Transverse colon (tissue), 4 donors: ENCODE measurements at regions of chr6 and their contacts with region 1.

Region 1: DNA sequence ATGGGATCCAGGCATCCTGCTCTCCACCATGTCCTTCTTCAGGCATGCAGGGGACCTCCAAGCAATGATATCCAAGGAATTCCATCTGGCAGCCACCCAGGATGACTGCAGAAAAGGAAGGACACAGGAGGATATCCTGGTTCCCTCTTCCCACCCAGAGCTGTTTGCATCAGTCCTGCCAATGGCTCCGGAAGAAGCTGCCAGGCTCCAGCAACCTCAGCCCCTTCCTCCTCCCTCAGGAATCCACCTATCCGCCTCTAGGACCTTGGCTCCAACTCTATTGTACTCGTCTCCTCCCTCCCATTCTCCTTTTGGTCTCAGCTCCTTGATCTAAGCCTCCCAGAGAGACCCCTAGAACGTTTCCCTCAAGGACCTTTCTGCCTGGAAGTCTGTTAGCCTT is 733 bp upstream of the PSORS1C2 start:
- DNase-seq: no peak
- H3K4me3 ChIP-seq: no peak overlapping the region
- H3K27ac ChIP-seq: no peak overlapping the region
- H3K4me1 ChIP-seq: peaks cover 0 to 26% (median 17%) of the 10 kb centered on the region in 4 donors
- H3K27me3 ChIP-seq: no peaks in the 10 kb centered on the region
- CTCF ChIP-seq: no peak
- EP300 ChIP-seq: no peak
- POLR2A ChIP-seq: no peak

Region 2: GRCh38 chr6:30508890-30509736 is 630.5 kb before region 1 on chr6:
- in situ Hi-C with region 1: no loop called
- intact Hi-C with region 1: no loop called
- DNase-seq: no peak
- H3K4me3 ChIP-seq: no peak overlapping the region
- H3K27ac ChIP-seq: peak overlapping the region; percentile 53 to 80 (median 66)
- H3K4me1 ChIP-seq: peaks cover 0 to 12% (median 0%) of the 10 kb centered on the region in 4 donors
- H3K27me3 ChIP-seq: no peaks in the 10 kb centered on the region
- CTCF ChIP-seq: no peak
- EP300 ChIP-seq: no peak
- POLR2A ChIP-seq: no peak

Region 3: GRCh38 chr6:31197559-31198305 is 58.1 kb after region 1 on chr6:
- in situ Hi-C with region 1: loop called in 3 of 4 experiments (anchors 5 to 10 kb)
- intact Hi-C with region 1: loop called (anchors 2 kb)
- DNase-seq: peak; percentile 95
- H3K4me3 ChIP-seq: peak overlapping the region; percentile 39 to 64 (median 54)
- H3K27ac ChIP-seq: peak overlapping the region; percentile 93 to 96 (median 94)
- H3K4me1 ChIP-seq: peaks cover 10 to 31% (median 20%) of the 10 kb centered on the region in 4 donors
- H3K27me3 ChIP-seq: no peaks in the 10 kb centered on the region
- CTCF ChIP-seq: no peak
- EP300 ChIP-seq: no peak
- POLR2A ChIP-seq: peak; percentile 85

Region 4: DNA sequence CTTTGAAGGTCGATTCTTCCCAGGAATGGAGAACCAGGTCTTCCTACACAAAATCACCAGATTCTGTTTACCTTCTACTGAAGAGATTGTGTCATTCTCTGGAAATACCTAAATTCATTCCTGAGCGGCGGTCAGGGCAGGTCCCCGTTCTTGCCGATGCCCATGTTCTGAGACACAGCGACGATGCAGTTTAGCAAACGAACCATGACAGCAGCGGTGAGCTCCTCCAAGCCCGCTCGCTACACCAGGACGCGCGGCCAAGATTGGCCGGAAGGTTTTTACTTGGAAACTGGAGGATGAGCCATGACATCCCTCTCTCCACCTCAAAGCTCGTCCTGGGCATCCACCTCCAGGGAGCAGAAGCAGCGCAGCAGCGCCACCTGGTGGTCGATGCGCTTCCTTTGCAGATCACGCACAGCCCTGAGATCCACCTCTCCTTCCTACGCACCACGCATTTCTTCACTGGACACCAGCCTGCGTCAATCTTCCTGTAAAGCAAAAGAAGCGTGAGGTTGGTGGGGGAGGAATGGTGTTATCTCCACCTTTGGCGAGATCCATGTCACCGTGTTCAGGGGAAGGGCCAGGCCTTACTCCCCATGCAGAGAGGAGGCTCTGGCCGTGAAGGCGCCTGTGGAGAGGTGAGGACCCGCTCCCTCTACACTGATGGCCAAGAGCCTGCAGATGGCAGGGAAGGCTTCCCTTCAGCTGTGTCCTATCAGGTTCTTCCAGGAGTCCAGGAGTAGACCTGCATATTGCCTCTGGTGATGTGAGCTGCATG is 227.3 kb after region 1 on chr6:
- in situ Hi-C with region 1: loop called in 3 of 4 experiments (anchors 5 to 10 kb)
- intact Hi-C with region 1: loop called (anchors 5 kb)
- DNase-seq: peak; percentile 90
- H3K4me3 ChIP-seq: peak overlapping the region in 1 of 4 donors; percentile 36
- H3K27ac ChIP-seq: no peak overlapping the region
- H3K4me1 ChIP-seq: peaks cover 0 to 4% (median 2%) of the 10 kb centered on the region in 4 donors
- H3K27me3 ChIP-seq: peaks cover 33% of the 10 kb centered on the region
- CTCF ChIP-seq: peak; percentile 91 to 98 (median 92)
- EP300 ChIP-seq: no peak
- POLR2A ChIP-seq: no peak

Region 5: GRCh38 chr6:31379850-31380249 is 240.3 kb after region 1 on chr6:
- in situ Hi-C with region 1: loop called in 1 of 4 experiments (anchors 5 kb)
- intact Hi-C with region 1: no loop called
- DNase-seq: peak; percentile 64
- H3K4me3 ChIP-seq: no peak overlapping the region
- H3K27ac ChIP-seq: peak overlapping the region in 2 of 4 donors; percentile 23 to 42
- H3K4me1 ChIP-seq: peaks cover 0 to 19% (median 5%) of the 10 kb centered on the region in 4 donors
- H3K27me3 ChIP-seq: peaks cover 8% of the 10 kb centered on the region
- CTCF ChIP-seq: no peak
- EP300 ChIP-seq: no peak
- POLR2A ChIP-seq: peak; percentile 63

Region 6: GRCh38 chr6:31441365-31442267 is 302.0 kb after region 1 on chr6:
- in situ Hi-C with region 1: loop called in 1 of 4 experiments (anchors 10 kb)
- intact Hi-C with region 1: no loop called
- DNase-seq: peak; percentile 87
- H3K4me3 ChIP-seq: peak overlapping the region in 1 of 4 donors; percentile 15
- H3K27ac ChIP-seq: no peak overlapping the region
- H3K4me1 ChIP-seq: peaks cover 0 to 5% (median 2%) of the 10 kb centered on the region in 4 donors
- H3K27me3 ChIP-seq: peaks cover 38% of the 10 kb centered on the region
- CTCF ChIP-seq: peak; percentile 82 to 87 (median 86)
- EP300 ChIP-seq: no peak
- POLR2A ChIP-seq: no peak

Region 7: GRCh38 chr6:31525932-31526591 is 386.5 kb after region 1 on chr6:
- in situ Hi-C with region 1: no loop called
- intact Hi-C with region 1: no loop called
- DNase-seq: no peak
- H3K4me3 ChIP-seq: no peak overlapping the region
- H3K27ac ChIP-seq: no peak overlapping the region
- H3K4me1 ChIP-seq: no peaks in the 10 kb centered on the region
- H3K27me3 ChIP-seq: no peaks in the 10 kb centered on the region
- CTCF ChIP-seq: no peak
- EP300 ChIP-seq: no peak
- POLR2A ChIP-seq: no peak